A673 (cell line): ENCODE measurements at regions of chr6 and their contacts with region 1.

Region 1: GRCh38 chr6:33585403-33586107 is 5.5 kb upstream of the BAK1 start:
- DNase-seq: peak; percentile 81
- H3K4me3 ChIP-seq: no peak overlapping the region
- H3K27ac ChIP-seq: no peak overlapping the region
- H3K4me1 ChIP-seq: no peaks in the 10 kb centered on the region
- H3K27me3 ChIP-seq: no peaks in the 10 kb centered on the region
- CTCF ChIP-seq: peak; percentile 98

Region 2: DNA sequence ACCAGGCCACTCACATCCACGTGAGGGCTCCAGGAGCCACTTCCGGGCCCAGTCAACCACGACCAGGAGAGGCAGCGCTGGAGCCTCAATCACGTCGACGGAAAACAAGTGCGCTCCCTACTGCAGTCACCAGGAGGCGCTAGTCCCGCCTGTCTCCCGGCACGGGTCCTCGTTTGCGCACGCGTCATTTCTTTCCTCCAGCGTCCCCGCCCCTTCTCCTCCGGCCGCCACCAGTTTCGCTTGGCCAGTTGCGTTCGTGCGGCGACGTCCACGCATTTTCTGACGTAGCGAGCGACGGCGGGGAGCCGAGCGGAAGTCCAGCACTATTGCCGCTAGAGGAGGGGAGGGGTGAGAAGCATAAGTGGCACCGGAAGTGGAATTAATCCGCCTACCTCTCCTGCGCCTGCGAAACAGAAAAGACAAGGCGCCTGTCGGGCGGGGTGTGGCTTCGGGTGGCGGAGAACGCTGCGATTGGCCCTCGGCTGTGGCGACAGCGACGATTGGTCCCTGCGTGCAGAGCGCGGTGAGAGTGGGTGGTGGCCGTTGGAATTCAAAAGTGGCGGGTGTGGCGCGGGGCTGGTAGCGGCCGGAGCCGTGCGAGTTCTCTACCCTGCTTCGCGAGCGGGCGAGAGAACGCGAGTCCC is 194.2 kb before region 1 on chr6 and contains the start of gene KIFC1:
- CTCF ChIA-PET with region 1: no interaction called
- POLR2A ChIA-PET with region 1: no interaction called
- intact Hi-C with region 1: no loop called
- DNase-seq: peak; percentile 100
- H3K4me3 ChIP-seq: peak within 1 kb of the TSS; percentile 98
- H3K27ac ChIP-seq: peak within 1 kb of the TSS; percentile 98
- H3K4me1 ChIP-seq: peaks cover 19% of the 10 kb centered on the region
- H3K27me3 ChIP-seq: no peaks in the 10 kb centered on the region
- CTCF ChIP-seq: peak; percentile 99
- total RNA-seq, gene KIFC1: 123 and 133 TPM in 2 replicates

Region 3: GRCh38 chr6:33633462-33634158 is 48.1 kb after region 1 on chr6:
- CTCF ChIA-PET with region 1: no interaction called
- POLR2A ChIA-PET with region 1: no interaction called
- intact Hi-C with region 1: loop called (anchors 5 kb)
- DNase-seq: peak; percentile 67
- H3K4me3 ChIP-seq: peak overlapping the region; percentile 47
- H3K27ac ChIP-seq: no peak overlapping the region
- H3K4me1 ChIP-seq: peaks cover 19% of the 10 kb centered on the region
- H3K27me3 ChIP-seq: no peaks in the 10 kb centered on the region
- CTCF ChIP-seq: no peak